IMR-90 (cell line): ENCODE measurements at regions of chr9 and their contacts with region 1.

Region 1: GRCh38 chr9:123696476-123696875 is 233.4 kb downstream of the DENND1A start:
- DNase-seq: peak; percentile 32
- ATAC-seq: peak; percentile 72
- H3K4me3 ChIP-seq: no peak overlapping the region
- H3K27ac ChIP-seq: no peak overlapping the region
- H3K4me1 ChIP-seq: 0 out of 2 replicates have a peak, but pooled peaks cover 2% of the 10 kb centered on the region
- H3K27me3 ChIP-seq: no peaks in the 10 kb centered on the region
- CTCF ChIP-seq: no peak
- POLR2A ChIP-seq: no peak
- RAD21 ChIP-seq: no peak

Region 2: DNA sequence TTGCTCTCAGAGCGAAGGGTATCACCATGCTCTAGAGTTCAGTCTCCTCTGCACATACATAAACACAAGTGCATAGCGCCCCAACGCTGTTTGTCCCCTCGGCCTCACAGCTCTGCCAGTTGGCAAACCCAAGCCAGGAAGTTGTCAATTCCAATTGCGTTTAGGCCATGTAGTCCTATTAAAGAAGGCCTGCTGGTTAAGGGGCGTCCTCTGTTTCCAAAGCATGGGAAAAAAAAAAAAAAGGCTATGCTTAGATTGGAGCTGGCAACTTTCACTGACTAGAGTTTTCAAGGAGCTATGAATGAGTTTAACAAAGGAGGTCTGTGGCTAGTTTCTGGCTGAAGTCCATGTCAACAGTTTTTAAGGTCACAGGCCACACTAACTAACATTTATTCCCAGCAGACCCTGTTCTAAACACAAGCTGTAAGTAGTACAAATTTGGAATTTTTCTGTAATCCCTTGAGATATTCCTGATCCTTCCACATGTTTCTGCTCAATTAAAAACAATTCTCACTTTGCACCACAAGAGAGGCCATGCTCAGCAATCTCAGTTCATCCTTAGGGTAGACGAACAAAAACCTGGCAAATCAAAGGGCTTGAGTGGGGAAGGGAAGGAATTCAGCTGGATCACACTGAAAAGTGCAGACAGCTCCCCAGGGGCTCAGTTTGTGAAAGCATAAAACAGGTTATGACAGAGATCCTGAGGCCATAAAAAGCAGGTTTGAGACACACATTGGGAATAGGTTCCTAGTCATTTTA is 45.7 kb after region 1 on chr9:
- CTCF ChIA-PET with region 1: no interaction called
- POLR2A ChIA-PET with region 1: no interaction called
- dilution Hi-C with region 1: no loop called
- in situ Hi-C with region 1: no loop called
- intact Hi-C with region 1: loop called (anchors 5 kb)
- DNase-seq: peak; percentile 57
- ATAC-seq: peak; percentile 82
- H3K4me3 ChIP-seq: no peak overlapping the region
- H3K27ac ChIP-seq: no peak overlapping the region
- H3K4me1 ChIP-seq: peaks cover 5% of the 10 kb centered on the region; the same call in 1 of the 2 replicates
- H3K27me3 ChIP-seq: no peaks in the 10 kb centered on the region
- CTCF ChIP-seq: no peak
- POLR2A ChIP-seq: no peak
- RAD21 ChIP-seq: no peak